Naive thymus-derived CD4-positive, alpha-beta T cell (primary cell): ENCODE measurements at regions of chr15 and their contacts with region 1.

Region 1: GRCh38 chr15:90564051-90564450 is 34.3 kb downstream of the CRTC3 start:
- DNase-seq: peak in 7 of 9 donors; percentile 46 to 80 (median 70)
- ATAC-seq: peak; percentile 65
- H3K4me3 ChIP-seq: peak overlapping the region; percentile 3
- H3K4me3 Mint-ChIP-seq: peak overlapping the region; percentile 60 to 90 (median 74)
- H3K27ac ChIP-seq: peak overlapping the region; percentile 68
- H3K27ac Mint-ChIP-seq: peak overlapping the region; percentile 89 to 99 (median 95)
- H3K4me1 ChIP-seq: peaks cover 49 to 89% of the 10 kb centered on the region in 2 donors
- H3K4me1 Mint-ChIP-seq: peaks cover 65 to 97% (median 90%) of the 10 kb centered on the region in 7 donors
- H3K27me3 ChIP-seq: no peaks in the 10 kb centered on the region
- H3K27me3 Mint-ChIP-seq: no peaks in the 10 kb centered on the region

Region 2: GRCh38 chr15:90376789-90377188 is 187.3 kb before region 1 on chr15:
- CTCF ChIA-PET with region 1: no interaction called
- POLR2A ChIA-PET with region 1: no interaction called
- intact Hi-C with region 1: no loop called
- DNase-seq: peak in 8 of 9 donors; percentile 58 to 81 (median 74)
- ATAC-seq: peak; percentile 98
- H3K4me3 ChIP-seq: peak overlapping the region; percentile 11
- H3K4me3 Mint-ChIP-seq: peak overlapping the region; percentile 66 to 87 (median 72)
- H3K27ac ChIP-seq: no peak overlapping the region
- H3K27ac Mint-ChIP-seq: peak overlapping the region; percentile 7 to 92 (median 56)
- H3K4me1 ChIP-seq: peaks cover 32 to 35% of the 10 kb centered on the region in 2 donors
- H3K4me1 Mint-ChIP-seq: peaks cover 24 to 59% (median 48%) of the 10 kb centered on the region in 7 donors
- H3K27me3 ChIP-seq: no peaks in the 10 kb centered on the region
- H3K27me3 Mint-ChIP-seq: no peaks in the 10 kb centered on the region

Region 3: DNA sequence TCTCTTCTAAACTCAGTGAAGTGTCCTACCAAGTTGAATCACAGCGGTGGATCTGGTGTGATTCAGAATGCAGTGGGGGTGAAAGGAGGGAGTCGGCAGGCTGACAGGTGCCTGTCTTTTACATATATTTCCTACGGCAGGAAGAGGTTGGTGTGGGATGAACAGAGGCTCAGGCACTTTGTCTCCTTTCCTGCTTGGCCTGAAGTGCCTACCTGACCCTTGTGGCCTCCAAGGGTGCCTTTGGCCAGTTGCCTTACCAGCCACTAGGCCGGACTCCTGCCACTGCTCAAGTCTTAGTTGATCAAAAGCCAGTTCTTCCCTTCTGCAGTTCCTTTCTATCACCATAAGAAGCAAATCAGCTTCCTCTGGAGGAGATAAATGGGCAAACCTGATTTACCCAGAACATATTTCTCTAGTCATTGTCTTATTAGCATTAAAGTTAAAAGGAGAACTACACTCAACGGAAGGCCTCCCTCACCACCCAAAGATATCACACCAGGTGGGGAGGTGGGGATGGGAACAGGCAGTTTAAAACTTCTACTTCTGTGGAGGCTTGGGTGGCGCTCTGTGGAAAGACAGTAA is 17.8 kb after region 1 on chr15:
- CTCF ChIA-PET with region 1: interaction called, 5 read pairs
- POLR2A ChIA-PET with region 1: interaction called, 10 read pairs
- intact Hi-C with region 1: loop called in 1 of 2 experiments (anchors 2 kb)
- DNase-seq: peak in 2 of 9 donors; percentile 25 to 29
- ATAC-seq: peak; percentile 51
- H3K4me3 ChIP-seq: no peak overlapping the region
- H3K4me3 Mint-ChIP-seq: peak overlapping the region; percentile 62 to 86 (median 76)
- H3K27ac ChIP-seq: peak overlapping the region; percentile 70
- H3K27ac Mint-ChIP-seq: peak overlapping the region; percentile 65 to 99 (median 92)
- H3K4me1 ChIP-seq: peaks cover 4 to 45% of the 10 kb centered on the region in 2 donors
- H3K4me1 Mint-ChIP-seq: peaks cover 48 to 94% (median 78%) of the 10 kb centered on the region in 7 donors
- H3K27me3 ChIP-seq: no peaks in the 10 kb centered on the region
- H3K27me3 Mint-ChIP-seq: no peaks in the 10 kb centered on the region

Region 4: GRCh38 chr15:90586948-90587347 is 22.9 kb after region 1 on chr15:
- CTCF ChIA-PET with region 1: interaction called, 5 read pairs
- POLR2A ChIA-PET with region 1: interaction called, 10 read pairs
- intact Hi-C with region 1: no loop called
- DNase-seq: no peak
- ATAC-seq: no peak
- H3K4me3 ChIP-seq: no peak overlapping the region
- H3K4me3 Mint-ChIP-seq: peak overlapping the region in 5 of 10 donors; percentile 10 to 57 (median 37)
- H3K27ac ChIP-seq: no peak overlapping the region
- H3K27ac Mint-ChIP-seq: peak overlapping the region in 8 of 9 donors; percentile 3 to 82 (median 40)
- H3K4me1 ChIP-seq: peaks cover 6 to 36% of the 10 kb centered on the region in 2 donors
- H3K4me1 Mint-ChIP-seq: peaks cover 40 to 77% (median 68%) of the 10 kb centered on the region in 7 donors
- H3K27me3 ChIP-seq: no peaks in the 10 kb centered on the region
- H3K27me3 Mint-ChIP-seq: no peaks in the 10 kb centered on the region

Region 5: GRCh38 chr15:90620379-90621067 is 56.5 kb after region 1 on chr15:
- CTCF ChIA-PET with region 1: interaction called, 4 read pairs
- POLR2A ChIA-PET with region 1: interaction called, 5 read pairs
- intact Hi-C with region 1: loop called in 1 of 2 experiments (anchors 1 kb)
- DNase-seq: peak in 5 of 9 donors; percentile 28 to 45 (median 39)
- ATAC-seq: peak; percentile 80
- H3K4me3 ChIP-seq: peak overlapping the region; percentile 32
- H3K4me3 Mint-ChIP-seq: peak overlapping the region; percentile 42 to 82 (median 75)
- H3K27ac ChIP-seq: peak overlapping the region; percentile 53
- H3K27ac Mint-ChIP-seq: peak overlapping the region; percentile 85 to 97 (median 90)
- H3K4me1 ChIP-seq: peaks cover 0 to 18% of the 10 kb centered on the region in 2 donors
- H3K4me1 Mint-ChIP-seq: peaks cover 21 to 44% (median 38%) of the 10 kb centered on the region in 7 donors
- H3K27me3 ChIP-seq: no peaks in the 10 kb centered on the region
- H3K27me3 Mint-ChIP-seq: no peaks in the 10 kb centered on the region